GM10248 (cell line): ENCODE measurements at regions of chr5 and their contacts with region 1.

Region 1: DNA sequence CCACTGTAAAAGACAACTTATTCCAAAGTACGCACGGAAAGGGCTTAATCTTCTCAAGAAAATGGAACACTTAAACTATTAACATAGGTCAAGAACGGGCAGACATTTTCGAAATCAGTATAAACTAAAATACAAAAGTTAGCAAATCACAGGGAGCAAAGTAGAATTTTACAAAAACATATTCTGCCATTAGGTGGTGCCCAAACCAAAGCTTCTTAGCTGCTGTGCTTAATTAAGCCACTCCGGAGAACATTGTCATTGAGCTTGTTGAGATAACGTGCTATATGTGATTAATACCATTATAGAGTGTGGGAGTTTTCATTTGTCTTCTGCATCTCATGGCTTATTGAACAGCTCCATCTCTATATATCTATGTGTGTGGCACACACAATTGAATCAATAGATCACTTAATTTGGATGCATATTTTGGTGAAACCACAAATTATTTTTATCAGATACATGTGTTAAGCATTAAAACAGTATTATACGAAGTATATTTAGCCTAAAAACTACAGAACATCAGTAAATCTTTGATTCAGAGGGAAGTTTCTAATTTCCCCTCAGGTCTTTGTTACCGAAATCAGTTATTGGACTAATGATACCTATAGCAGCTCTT is 23.4 kb downstream of the UBLCP1 start:
- DNase-seq: no peak
- CTCF ChIP-seq: peak; percentile 44

Region 2: GRCh38 chr5:159100025-159100781 is 186.3 kb before region 1 on chr5:
- CTCF ChIA-PET with region 1: no interaction called
- POLR2A ChIA-PET with region 1: no interaction called
- DNase-seq: peak; percentile 87
- CTCF ChIP-seq: no peak

Region 3: GRCh38 chr5:159209438-159210305 is 76.9 kb before region 1 on chr5 and contains the start of gene RNF145:
- CTCF ChIA-PET with region 1: no interaction called
- POLR2A ChIA-PET with region 1: no interaction called
- DNase-seq: peak; percentile 92
- CTCF ChIP-seq: no peak

Region 4: GRCh38 chr5:159274676-159275075 is 11.9 kb before region 1 on chr5:
- CTCF ChIA-PET with region 1: interaction called, 14 read pairs
- POLR2A ChIA-PET with region 1: no interaction called
- DNase-seq: no peak
- CTCF ChIP-seq: no peak

Region 5: GRCh38 chr5:159310511-159310910 is 24.0 kb after region 1 on chr5:
- CTCF ChIA-PET with region 1: interaction called, 11 read pairs
- POLR2A ChIA-PET with region 1: no interaction called
- DNase-seq: no peak
- CTCF ChIP-seq: no peak

Region 6: GRCh38 chr5:159566832-159567231 is 280.3 kb after region 1 on chr5:
- CTCF ChIA-PET with region 1: no interaction called
- POLR2A ChIA-PET with region 1: no interaction called
- DNase-seq: no peak
- CTCF ChIP-seq: no peak